ENCODE measurements at regions of chr3 and their contacts with region 1.

Region 1: DNA sequence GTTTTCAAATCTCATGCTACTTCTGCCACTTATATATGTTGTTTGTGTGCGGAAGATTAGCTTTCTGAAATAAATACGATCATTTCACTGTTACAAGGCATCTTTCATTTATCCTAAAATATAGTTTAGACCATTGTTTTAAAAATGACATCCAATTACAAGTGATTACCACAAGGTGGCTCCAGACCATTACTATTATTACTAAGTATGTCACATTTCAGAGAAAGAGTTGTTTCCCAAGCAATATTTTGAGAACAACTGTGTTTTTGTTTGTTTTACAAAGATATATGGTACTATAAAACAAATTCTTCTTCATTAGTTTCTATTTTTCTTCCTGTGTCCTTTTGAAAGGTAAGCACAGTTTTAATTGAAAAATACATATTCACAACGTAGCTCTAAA is 136.0 kb upstream of the RAP2B start:
- ATAC-seq: peak in 3 of 8 experiments; percentile 18 to 55 (median 27)
- H3K4me3 ChIP-seq: no peak overlapping the region
- H3K27ac ChIP-seq: no peak overlapping the region
- H3K4me1 ChIP-seq: no peaks in the 10 kb centered on the region

Region 2: GRCh38 chr3:153443961-153444360 is 417.9 kb after region 1 on chr3:
- in situ Hi-C with region 1: loop called in 1 of 9 experiments (anchors 25 kb)
- ATAC-seq: no peak
- H3K4me3 ChIP-seq: no peak overlapping the region
- H3K27ac ChIP-seq: no peak overlapping the region
- H3K4me1 ChIP-seq: no peaks in the 10 kb centered on the region

Region 3: GRCh38 chr3:153495422-153495821 is 469.4 kb after region 1 on chr3:
- in situ Hi-C with region 1: no loop called
- ATAC-seq: no peak
- H3K4me3 ChIP-seq: no peak overlapping the region
- H3K27ac ChIP-seq: no peak overlapping the region
- H3K4me1 ChIP-seq: no peaks in the 10 kb centered on the region

Region 4: DNA sequence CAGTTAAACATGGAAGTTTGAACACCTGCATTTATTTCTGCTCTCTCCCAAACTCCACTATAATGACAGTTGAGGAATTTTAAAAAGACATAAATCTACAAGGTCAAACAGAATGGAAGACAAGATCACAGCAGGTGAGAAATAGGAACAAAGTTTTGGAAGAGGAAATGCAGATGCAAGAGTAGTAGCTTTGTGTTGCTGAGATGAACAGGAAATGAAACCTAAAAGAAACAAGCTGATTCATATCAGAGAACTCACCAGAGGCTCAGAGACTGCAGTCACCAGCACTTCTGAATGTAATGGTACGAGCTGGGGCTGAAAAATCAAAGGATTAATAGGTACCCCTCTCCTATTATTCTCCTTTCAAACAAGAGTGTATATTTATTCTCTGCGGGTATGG is 595.9 kb after region 1 on chr3:
- in situ Hi-C with region 1: loop called in 1 of 9 experiments (anchors 25 kb)
- ATAC-seq: no peak
- H3K4me3 ChIP-seq: no peak overlapping the region
- H3K27ac ChIP-seq: no peak overlapping the region
- H3K4me1 ChIP-seq: no peaks in the 10 kb centered on the region

Region 5: DNA sequence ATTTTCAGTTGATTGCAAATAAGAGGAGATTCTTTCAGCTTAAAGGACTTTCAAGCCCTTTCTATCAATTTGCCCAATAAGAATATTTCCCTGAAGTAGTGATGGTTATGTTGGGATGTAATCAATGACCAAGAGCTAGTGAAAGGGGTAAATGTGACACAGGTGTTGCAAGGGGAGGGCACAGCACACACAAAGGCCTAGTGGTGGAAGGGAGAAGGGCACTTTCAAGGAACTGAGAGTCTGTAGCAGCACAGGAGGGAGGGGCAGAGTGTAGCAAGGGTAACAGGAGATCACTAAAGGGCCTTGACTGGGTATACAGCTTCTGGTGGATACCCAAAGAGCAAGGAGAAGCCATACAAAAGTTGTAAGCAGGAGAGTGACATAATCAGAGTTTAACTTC is 877.4 kb after region 1 on chr3:
- in situ Hi-C with region 1: loop called in 1 of 9 experiments (anchors 25 kb)
- ATAC-seq: no peak
- H3K4me3 ChIP-seq: no peak overlapping the region
- H3K27ac ChIP-seq: no peak overlapping the region
- H3K4me1 ChIP-seq: no peaks in the 10 kb centered on the region

Region 6: GRCh38 chr3:154243353-154243752 is 1217.3 kb after region 1 on chr3:
- in situ Hi-C with region 1: loop called in 1 of 9 experiments (anchors 25 kb)
- ATAC-seq: peak in 2 of 8 experiments; percentile 44 to 50
- H3K4me3 ChIP-seq: no peak overlapping the region
- H3K27ac ChIP-seq: no peak overlapping the region
- H3K4me1 ChIP-seq: peaks cover 6 to 13% of the 10 kb centered on the region in 2 donors